ENCODE measurements at regions of chr4 and their contacts with region 1.

Region 1: DNA sequence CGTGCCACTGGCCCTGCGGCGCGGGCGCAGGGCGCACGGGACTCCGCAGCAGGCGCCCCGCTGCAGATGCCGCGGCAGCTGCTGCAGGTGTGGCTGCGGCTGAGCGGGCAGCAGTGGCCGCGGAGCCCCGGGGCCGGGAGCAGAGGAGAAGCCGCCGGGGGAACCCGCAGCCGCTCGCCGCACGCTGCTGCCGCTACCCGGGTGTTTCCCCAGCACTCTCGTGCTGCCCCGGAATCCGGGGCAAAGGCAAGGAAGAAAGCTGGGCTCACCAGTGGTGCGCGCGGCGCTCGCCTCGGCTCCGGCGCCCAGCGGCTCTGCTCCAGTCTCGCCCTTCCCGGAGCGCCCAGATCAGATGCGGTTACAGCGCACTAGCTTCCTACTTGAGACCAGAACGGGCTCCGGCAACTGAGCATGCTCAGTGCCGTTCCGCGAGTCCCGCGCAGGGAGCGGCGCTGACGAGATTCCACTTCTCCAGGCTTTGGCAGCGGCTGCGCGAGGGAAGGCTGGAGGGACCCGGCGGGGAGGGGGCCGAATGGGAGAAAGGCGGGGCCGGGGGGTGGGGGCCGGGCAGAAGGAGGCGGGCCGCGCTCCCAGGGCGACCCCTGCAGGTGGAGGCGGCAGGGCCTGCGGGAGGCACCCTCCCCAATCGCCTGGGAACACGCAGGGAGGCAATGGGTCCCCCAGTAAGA is at the start of gene APBB2:
- DNase-seq: peak; percentile 95
- H3K4me3 ChIP-seq: peak within 1 kb of the TSS; percentile 86 to 90
- H3K27ac ChIP-seq: peak within 1 kb of the TSS; percentile 76 to 90
- H3K4me1 ChIP-seq: peaks cover 2% of the 10 kb centered on the region
- H3K27me3 ChIP-seq: no peaks in the 10 kb centered on the region
- CTCF ChIP-seq: peak; percentile 62 to 92 (median 79)
- POLR2A ChIP-seq: peak; percentile 91
- total RNA-seq, gene APBB2: 17.4 to 56.6 TPM

Region 2: DNA sequence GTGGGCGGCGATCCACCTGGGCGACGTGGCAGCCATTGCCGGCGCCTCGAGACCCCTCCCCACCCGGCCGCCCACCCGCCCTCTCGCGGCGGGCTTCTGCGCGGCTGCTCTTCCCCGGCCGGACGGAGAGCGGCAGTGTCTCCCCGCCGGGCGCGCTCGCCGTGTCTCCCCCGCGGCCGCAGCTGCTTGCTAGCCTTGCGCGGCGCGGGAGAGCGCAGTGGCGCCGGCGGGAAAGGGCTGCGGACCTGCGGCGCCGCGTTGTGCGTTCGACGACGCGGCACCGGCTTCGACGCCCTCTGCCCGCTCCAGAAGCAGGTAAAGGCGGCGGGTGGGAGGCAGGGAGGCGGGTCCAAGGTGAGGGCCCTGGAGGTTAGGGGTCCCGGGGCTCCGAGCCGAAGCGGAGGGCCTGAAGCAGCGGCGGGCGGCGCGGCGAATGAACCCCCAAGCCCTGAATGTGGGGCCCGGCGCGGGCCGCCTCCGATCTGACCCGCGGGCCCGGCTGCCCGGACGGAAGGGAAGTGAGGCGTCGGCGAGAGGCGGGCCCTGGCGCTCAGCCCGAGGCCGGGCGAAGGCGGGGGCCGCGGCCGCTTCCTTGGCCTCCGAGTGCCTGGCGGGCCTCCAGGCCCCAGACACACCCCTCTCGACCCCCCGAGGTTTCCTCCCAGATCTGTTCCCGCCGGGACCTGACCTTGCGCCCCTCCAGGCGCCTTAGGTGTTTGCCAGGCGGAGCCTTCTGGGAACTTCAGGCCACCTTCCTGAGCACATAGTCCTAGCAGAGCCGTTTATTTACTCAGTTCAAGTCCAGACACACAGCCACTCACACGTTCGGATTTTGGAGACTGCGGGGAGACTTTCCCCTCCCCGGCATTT is 1157.3 kb before region 1 on chr4 and contains the start of gene N4BP2:
- intact Hi-C with region 1: loop called (anchors 10 kb)
- DNase-seq: peak; percentile 78
- H3K4me3 ChIP-seq: peak within 1 kb of the TSS; percentile 87 to 91
- H3K27ac ChIP-seq: peak within 1 kb of the TSS; percentile 99 to 100
- H3K4me1 ChIP-seq: peaks cover 4% of the 10 kb centered on the region
- H3K27me3 ChIP-seq: no peaks in the 10 kb centered on the region
- CTCF ChIP-seq: peak; percentile 80 to 96 (median 87)
- POLR2A ChIP-seq: peak; percentile 85
- total RNA-seq, gene N4BP2: 8.7 to 14.7 TPM

Region 3: DNA sequence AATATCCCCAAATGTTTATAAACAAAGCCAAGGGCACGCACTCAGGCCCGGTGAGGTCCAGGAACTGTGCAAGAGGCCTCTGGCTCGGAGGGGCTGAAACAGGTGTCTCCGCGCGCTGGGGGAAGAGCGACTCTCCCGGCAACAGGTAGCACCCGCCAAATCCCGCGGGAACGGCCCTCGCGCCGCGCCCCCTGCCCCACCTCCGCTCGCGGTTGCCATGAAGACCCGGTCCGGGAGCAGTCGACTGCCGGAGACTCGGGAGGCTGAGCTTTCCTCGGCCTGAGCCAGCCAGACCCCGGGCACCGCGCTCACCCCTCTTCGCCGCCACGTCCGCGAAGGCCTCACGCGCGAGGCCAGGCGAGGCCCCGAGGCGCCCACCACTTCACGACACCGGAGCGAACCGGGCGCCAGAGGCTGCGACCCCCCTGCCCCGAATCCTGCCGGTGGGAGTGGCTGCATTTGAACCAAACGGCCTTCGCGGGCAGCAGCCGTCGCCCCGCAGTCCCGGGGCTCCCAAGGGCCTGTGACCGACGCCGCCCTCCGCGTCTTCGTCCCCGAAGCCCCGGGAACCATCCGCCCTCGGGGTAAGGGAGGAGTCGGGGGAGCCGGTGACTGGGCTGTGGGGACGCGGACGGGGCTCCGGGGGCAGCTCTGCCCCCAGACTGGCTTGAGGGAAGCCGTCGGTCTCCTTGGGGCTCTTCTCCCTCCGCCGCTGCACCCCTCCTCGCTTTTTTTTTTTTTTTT is 464.4 kb before region 1 on chr4 and contains the start of gene NSUN7:
- intact Hi-C with region 1: loop called (anchors 10 kb)
- DNase-seq: peak; percentile 75
- H3K4me3 ChIP-seq: peak within 1 kb of the TSS; percentile 64 to 66
- H3K27ac ChIP-seq: peak within 1 kb of the TSS; percentile 76 to 84
- H3K4me1 ChIP-seq: peaks cover 4% of the 10 kb centered on the region
- H3K27me3 ChIP-seq: no peaks in the 10 kb centered on the region
- CTCF ChIP-seq: peak in 1 of 4 experiments; percentile 10
- POLR2A ChIP-seq: peak; percentile 45
- total RNA-seq, gene NSUN7: 12.6 to 14.3 TPM

Region 4: GRCh38 chr4:40924793-40925117 is 289.5 kb before region 1 on chr4:
- intact Hi-C with region 1: loop called (anchors 2 kb)
- DNase-seq: no peak
- H3K4me3 ChIP-seq: no peak overlapping the region
- H3K27ac ChIP-seq: no peak overlapping the region
- H3K4me1 ChIP-seq: no peaks in the 10 kb centered on the region
- H3K27me3 ChIP-seq: no peaks in the 10 kb centered on the region
- CTCF ChIP-seq: no peak
- POLR2A ChIP-seq: no peak

Region 5: GRCh38 chr4:40976343-40976742 is 237.9 kb before region 1 on chr4:
- intact Hi-C with region 1: loop called (anchors 2 kb)
- DNase-seq: peak; percentile 68
- H3K4me3 ChIP-seq: no peak overlapping the region
- H3K27ac ChIP-seq: no peak overlapping the region
- H3K4me1 ChIP-seq: no peaks in the 10 kb centered on the region
- H3K27me3 ChIP-seq: no peaks in the 10 kb centered on the region
- CTCF ChIP-seq: peak; percentile 47 to 83 (median 76)
- POLR2A ChIP-seq: no peak

Region 6: DNA sequence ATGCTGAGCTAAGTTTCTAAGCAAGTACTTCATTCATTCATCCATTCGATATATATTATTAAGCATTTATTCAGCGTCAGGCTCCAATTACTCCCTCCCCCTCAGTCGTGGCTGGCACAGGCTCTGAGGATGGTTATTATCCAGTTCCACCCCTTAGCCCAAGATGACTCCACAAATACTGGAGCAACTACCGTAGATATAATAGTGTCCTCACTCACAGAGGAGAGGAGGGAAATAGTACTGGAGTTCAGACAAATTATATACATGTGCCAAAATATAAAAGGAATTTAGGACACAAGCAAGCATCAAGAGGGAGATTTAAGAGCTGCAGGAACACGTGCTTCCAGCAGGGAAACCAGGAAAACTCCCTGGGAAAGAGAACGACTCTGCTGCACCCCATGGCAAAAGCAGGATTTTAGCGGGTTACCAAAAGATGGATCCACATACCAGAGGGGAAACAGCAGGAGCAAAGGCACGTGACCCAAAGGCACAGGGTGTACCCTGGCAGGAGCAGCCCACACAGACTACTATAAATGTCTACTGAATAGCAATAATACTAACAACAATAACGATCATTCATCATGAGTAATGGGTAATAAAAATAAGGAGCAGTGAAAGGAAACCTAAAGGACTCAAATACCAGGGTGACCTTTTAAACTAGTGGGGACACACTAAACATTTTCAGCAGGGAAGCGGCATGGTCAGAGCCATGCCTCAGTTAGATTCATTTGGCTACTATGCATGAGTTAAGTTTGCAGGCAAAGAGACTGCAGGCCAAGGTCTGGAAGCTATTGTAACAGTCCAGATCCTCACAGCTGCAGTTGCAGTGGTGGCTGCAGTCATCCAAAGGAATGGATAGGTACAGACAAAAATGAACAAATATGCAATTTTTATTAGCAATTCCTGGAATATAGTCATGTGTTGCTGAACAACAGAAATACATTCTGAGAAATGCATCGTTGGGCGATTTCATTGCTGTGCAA is 153.6 kb before region 1 on chr4:
- intact Hi-C with region 1: loop called (anchors 10 kb)
- DNase-seq: peak; percentile 9
- H3K4me3 ChIP-seq: no peak overlapping the region
- H3K27ac ChIP-seq: peak overlapping the region in 1 of 2 donors; percentile 2
- H3K4me1 ChIP-seq: no peaks in the 10 kb centered on the region
- H3K27me3 ChIP-seq: no peaks in the 10 kb centered on the region
- CTCF ChIP-seq: no peak
- POLR2A ChIP-seq: no peak

Region 7: DNA sequence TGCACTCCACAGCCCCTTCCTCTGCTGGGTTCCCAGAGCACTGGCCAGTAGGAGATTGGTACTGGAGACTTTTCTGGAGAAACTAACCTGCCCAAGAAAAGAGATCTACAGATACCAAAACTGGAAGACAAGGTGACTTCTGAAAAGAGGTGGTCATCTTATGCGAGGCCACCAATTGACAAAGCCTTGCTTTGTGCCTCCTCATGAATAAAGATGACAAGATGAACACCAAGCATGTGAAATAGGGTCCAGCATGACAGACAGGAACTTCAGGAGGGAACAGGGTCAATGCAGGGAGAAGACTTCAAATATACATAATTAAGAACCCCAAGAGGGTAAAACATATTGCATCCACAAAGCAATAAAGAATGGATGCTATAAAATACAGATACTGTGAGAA is 137.8 kb before region 1 on chr4:
- intact Hi-C with region 1: no loop called
- DNase-seq: no peak
- H3K4me3 ChIP-seq: no peak overlapping the region
- H3K27ac ChIP-seq: no peak overlapping the region
- H3K4me1 ChIP-seq: peaks cover 3% of the 10 kb centered on the region
- H3K27me3 ChIP-seq: no peaks in the 10 kb centered on the region
- CTCF ChIP-seq: no peak
- POLR2A ChIP-seq: no peak

Measured in prostate gland (tissue), 2 donors.